Dendritic cell treated with granulocyte-macrophage colony-stimulating factor and Interleukin-4, amounts not matched to agents 40 ng/mL and 50 ng/mL, for 4 days (primary cell): ENCODE measurements at regions of chr12 and their contacts with region 1.

Region 1: DNA sequence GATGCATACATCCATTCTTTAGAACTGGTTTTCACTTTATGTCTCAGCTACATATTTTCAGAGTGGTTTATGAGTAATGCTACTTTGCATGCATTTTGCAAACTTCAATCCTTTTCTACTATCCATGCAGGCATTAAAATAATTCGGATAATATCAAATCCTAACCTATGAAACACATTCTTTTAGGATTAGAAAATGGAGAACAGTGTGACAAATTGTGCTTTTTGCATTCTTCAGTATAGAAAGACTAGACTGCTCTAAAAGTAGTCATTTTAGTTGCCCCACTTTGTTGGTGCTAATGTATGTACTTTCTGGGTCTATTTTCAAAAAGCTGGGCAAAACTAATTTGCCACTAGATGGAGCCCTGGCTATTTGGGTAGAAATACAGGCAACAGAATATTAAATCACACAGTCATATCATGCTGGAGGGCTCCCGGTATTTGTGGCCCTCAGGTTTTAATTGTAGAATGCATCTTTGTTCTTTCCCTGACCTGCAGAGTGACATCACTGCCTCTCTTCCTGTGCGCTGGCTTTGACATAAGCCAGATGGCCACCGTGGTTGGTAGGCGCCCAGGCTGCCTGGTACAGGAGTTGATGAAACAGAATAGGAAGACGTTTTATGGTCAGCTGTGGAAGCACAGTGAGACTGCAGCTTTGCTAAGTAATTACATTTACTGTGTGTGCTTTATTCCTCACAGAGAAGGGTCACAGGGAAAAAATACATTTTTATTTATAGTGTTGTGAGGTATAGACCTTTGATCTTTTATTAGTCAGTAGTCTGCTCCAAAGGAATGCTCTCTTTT is 28.1 kb downstream of the MSRB3 start:
- H3K4me3 Mint-ChIP-seq: peak overlapping the region; percentile 49
- H3K27ac Mint-ChIP-seq: no peak overlapping the region
- H3K4me1 Mint-ChIP-seq: peaks cover 23% of the 10 kb centered on the region
- H3K27me3 Mint-ChIP-seq: no peaks in the 10 kb centered on the region

Region 2: GRCh38 chr12:64826234-64826633 is 480.3 kb before region 1 on chr12:
- intact Hi-C with region 1: no loop called
- H3K4me3 Mint-ChIP-seq: no peak overlapping the region
- H3K27ac Mint-ChIP-seq: no peak overlapping the region
- H3K4me1 Mint-ChIP-seq: peaks cover 16% of the 10 kb centered on the region
- H3K27me3 Mint-ChIP-seq: peaks cover 67% of the 10 kb centered on the region

Region 3: GRCh38 chr12:65192963-65193516 is 113.5 kb before region 1 on chr12:
- intact Hi-C with region 1: no loop called
- H3K4me3 Mint-ChIP-seq: no peak overlapping the region
- H3K27ac Mint-ChIP-seq: no peak overlapping the region
- H3K4me1 Mint-ChIP-seq: peaks cover 22% of the 10 kb centered on the region
- H3K27me3 Mint-ChIP-seq: no peaks in the 10 kb centered on the region

Region 4: DNA sequence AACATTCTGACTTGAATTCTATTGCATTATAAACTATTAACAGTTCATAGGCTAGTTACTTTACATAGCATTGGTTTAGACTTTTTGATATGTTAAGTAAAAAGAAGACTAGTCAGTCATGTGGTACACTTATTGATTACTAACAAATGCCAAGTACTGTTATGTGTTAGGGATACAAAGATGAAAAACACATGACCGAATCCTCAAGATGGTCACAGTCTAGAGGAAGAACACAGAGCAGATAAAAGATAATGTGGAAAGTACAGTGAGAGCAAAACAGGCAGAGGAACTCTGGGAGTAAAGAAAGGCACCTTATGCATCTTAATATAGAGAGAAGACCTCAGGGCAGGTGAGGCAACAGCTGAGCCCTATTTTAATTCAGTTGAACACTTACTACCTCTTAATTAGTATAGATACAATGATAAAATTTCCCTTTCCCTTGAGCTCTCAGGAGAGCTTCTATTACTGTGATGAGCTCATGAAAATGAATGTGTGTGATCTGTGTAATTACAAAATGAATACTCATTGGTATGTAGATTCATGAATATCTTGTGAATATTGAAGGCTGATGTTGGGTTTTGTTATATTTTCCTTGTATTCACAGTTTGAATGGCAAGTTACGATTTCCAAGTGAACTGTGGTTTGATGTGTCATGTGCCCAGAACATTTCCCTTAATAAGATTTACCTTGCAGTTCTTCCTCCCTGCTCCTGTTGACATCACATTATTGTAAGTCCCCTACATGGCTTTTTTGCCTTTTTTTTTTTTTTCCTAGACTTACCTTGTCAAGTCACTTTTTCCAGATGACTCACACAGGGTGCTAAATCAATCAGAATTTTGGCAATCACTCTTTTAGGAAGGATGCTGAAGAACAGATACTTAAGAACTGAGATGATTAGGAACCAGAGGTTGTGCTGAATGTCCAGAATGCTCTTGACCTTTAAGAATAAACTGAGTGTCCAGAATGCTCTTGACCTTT is 57.6 kb before region 1 on chr12:
- intact Hi-C with region 1: no loop called
- H3K4me3 Mint-ChIP-seq: no peak overlapping the region
- H3K27ac Mint-ChIP-seq: no peak overlapping the region
- H3K4me1 Mint-ChIP-seq: no peaks in the 10 kb centered on the region
- H3K27me3 Mint-ChIP-seq: no peaks in the 10 kb centered on the region

Region 5: DNA sequence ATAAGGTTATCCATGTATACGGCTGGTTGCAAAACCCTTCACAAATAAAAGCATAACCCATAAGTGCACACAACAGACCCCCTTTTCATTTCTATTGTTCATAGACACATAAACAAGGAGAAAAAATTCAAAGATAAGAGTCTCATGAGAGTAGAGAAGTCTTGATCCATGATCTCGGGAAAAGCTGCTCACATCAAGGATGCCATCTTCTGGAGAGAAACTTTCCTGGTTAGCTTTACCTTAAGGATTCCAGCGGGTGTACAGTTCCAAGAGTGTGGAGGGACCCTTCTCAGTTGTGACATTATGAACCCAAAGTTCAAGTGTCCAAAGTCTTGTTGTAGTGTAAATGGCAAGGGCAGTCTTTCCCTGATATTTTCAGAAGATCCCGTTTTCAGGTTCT is 679.5 kb after region 1 on chr12:
- intact Hi-C with region 1: loop called (anchors 5 kb)
- H3K4me3 Mint-ChIP-seq: no peak overlapping the region
- H3K27ac Mint-ChIP-seq: no peak overlapping the region
- H3K4me1 Mint-ChIP-seq: no peaks in the 10 kb centered on the region
- H3K27me3 Mint-ChIP-seq: no peaks in the 10 kb centered on the region